Activated naive CD4-positive, alpha-beta T cell treated with anti-CD3 and anti-CD28 coated beads for 36 hours (primary cell): ENCODE measurements at regions of chr4 and their contacts with region 1.

Region 1: GRCh38 chr4:54941994-54942552 is 183.3 kb downstream of the KDR start:
- DNase-seq: peak; percentile 65
- H3K4me3 Mint-ChIP-seq: peak overlapping the region; percentile 42
- H3K27ac Mint-ChIP-seq: peak overlapping the region; percentile 69
- H3K4me1 Mint-ChIP-seq: peaks cover 55% of the 10 kb centered on the region
- H3K27me3 Mint-ChIP-seq: no peaks in the 10 kb centered on the region

Region 2: GRCh38 chr4:53730031-53730805 is 1211.9 kb before region 1 on chr4:
- CTCF ChIA-PET with region 1: no interaction called
- intact Hi-C with region 1: no loop called
- DNase-seq: no peak
- H3K4me3 Mint-ChIP-seq: no peak overlapping the region
- H3K27ac Mint-ChIP-seq: no peak overlapping the region
- H3K4me1 Mint-ChIP-seq: no peaks in the 10 kb centered on the region
- H3K27me3 Mint-ChIP-seq: peaks cover 3% of the 10 kb centered on the region

Region 3: GRCh38 chr4:54120518-54120917 is 821.6 kb before region 1 on chr4:
- CTCF ChIA-PET with region 1: no interaction called
- intact Hi-C with region 1: no loop called
- DNase-seq: no peak
- H3K4me3 Mint-ChIP-seq: no peak overlapping the region
- H3K27ac Mint-ChIP-seq: no peak overlapping the region
- H3K4me1 Mint-ChIP-seq: no peaks in the 10 kb centered on the region
- H3K27me3 Mint-ChIP-seq: peaks cover 18% of the 10 kb centered on the region

Region 4: DNA sequence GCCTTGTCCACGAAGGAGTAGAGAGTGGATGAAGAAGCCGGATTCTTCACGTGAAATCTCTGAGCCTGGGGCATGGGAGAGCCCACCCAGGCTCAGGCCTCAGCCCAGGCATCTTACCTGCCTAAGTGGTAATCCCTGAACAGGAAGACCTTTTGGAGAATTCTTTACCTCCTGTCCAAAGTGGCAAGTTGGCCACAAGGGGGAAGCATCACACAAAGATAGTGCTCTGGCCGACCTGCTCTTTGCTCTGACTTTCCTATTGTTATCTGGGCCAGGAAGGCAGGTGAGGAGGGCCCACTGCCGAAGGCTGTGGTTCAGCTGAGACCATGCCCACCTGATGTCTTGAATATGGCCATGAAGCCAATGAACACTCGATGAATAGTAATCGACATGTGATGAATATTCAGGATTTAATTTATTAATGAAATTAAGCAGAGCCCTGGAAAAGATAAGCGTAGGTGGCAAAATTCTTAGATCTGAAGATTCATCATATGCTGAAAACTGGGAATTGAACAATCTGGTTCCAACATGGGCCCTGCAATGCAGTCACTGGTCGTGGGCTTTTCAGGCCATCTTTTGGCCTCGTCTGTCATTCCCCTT is 619.2 kb before region 1 on chr4:
- CTCF ChIA-PET with region 1: no interaction called
- intact Hi-C with region 1: loop called (anchors 2 kb)
- DNase-seq: peak; percentile 78
- H3K4me3 Mint-ChIP-seq: no peak overlapping the region
- H3K27ac Mint-ChIP-seq: no peak overlapping the region
- H3K4me1 Mint-ChIP-seq: no peaks in the 10 kb centered on the region
- H3K27me3 Mint-ChIP-seq: no peaks in the 10 kb centered on the region

Region 5: GRCh38 chr4:54683616-54684346 is 258.3 kb before region 1 on chr4:
- CTCF ChIA-PET with region 1: interaction called, 5 read pairs
- intact Hi-C with region 1: loop called (anchors 1 kb)
- DNase-seq: peak; percentile 81
- H3K4me3 Mint-ChIP-seq: no peak overlapping the region
- H3K27ac Mint-ChIP-seq: no peak overlapping the region
- H3K4me1 Mint-ChIP-seq: peaks cover 20% of the 10 kb centered on the region
- H3K27me3 Mint-ChIP-seq: no peaks in the 10 kb centered on the region

Region 6: DNA sequence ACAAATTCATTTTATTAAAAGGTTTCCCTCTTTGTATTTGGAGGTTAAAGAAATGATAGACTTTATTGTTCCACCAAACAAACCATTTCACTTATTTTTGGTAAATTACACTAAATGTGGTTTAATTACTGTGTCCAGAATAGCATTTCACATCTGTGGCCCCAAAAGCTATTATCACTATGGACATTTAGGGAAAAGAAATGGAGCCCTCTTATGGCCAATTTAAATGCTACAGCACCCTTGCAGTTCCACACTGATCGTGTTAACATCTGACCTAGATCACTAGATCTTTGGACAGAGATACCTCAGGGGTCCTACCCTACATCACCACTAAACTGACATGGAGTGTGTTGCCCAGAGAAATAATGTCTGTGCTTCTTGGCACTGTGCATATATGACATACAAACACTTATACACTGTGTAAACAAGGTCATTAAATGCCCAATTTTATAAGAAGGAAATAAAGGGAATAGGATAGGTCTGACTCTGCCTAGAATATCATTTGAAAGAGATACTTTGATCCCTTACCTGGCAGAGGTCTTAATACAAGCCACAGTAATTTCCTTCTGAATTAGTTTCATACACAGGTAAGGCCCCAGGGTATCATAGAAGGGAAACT is 19.4 kb after region 1 on chr4:
- CTCF ChIA-PET with region 1: interaction called, 6 read pairs
- intact Hi-C with region 1: loop called (anchors 1 kb)
- DNase-seq: peak; percentile 15
- H3K4me3 Mint-ChIP-seq: no peak overlapping the region
- H3K27ac Mint-ChIP-seq: no peak overlapping the region
- H3K4me1 Mint-ChIP-seq: peaks cover 26% of the 10 kb centered on the region
- H3K27me3 Mint-ChIP-seq: no peaks in the 10 kb centered on the region

Region 7: DNA sequence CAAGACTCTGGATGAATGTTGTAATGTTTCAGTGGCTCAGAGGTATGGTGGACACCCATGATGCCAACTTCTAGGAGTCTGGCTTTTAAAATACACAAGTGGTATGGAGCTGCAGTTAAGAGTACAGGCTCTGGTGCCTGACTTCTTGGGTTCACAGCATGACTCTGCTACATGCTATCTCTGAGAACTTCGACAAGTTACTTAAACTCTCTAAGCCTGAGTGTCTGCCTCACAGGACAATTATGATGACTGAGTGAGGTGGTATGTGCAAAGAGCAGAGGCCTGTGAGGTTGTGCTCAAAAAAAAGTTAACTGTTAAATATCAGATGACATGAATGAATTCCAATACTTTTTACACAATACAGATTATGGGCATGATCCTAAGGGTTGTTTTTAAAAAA is 313.1 kb after region 1 on chr4:
- CTCF ChIA-PET with region 1: no interaction called
- intact Hi-C with region 1: no loop called
- DNase-seq: no peak
- H3K4me3 Mint-ChIP-seq: no peak overlapping the region
- H3K27ac Mint-ChIP-seq: no peak overlapping the region
- H3K4me1 Mint-ChIP-seq: no peaks in the 10 kb centered on the region
- H3K27me3 Mint-ChIP-seq: peaks cover 11% of the 10 kb centered on the region

Region 8: DNA sequence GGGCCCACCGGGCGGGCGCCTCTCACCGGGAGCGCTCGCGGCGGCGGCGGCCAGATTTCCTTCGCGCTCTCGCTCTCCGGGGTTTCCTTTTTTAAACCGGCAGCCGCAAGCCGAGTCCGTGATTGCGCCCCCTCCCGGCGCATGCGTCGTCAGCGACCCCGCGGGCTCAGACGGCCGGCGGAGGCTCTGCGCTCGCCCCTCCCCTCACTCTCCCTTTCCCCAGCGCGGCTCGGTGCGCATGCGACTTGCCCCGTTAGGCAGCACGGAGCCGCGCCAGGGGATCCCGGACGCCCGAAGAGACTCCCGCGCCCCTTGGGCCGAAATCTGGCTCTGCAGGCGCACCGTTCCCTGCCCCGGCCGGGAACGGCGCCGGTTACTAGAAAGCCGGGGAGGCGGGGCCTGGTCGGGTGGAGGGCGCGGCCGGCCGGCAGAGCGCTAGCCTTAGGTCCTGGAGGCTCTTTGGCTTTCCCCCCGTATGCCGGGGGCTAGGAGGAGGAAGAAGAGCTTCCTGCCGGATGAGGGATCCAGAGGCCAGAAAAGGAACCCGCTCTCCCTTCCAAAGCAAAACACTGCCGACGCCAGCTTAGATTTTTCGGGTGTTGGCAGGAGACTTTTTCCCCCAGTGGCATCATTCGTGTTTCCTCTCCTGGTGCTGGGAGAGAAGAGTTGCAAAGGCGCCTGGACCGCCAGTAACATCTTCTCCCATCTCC is 604.8 kb after region 1 on chr4 and contains the start of gene CLOCK:
- CTCF ChIA-PET with region 1: no interaction called
- intact Hi-C with region 1: loop called (anchors 2 kb)
- DNase-seq: peak; percentile 83
- H3K4me3 Mint-ChIP-seq: peak within 1 kb of the TSS; percentile 84
- H3K27ac Mint-ChIP-seq: peak within 1 kb of the TSS; percentile 89
- H3K4me1 Mint-ChIP-seq: peaks cover 50% of the 10 kb centered on the region
- H3K27me3 Mint-ChIP-seq: no peaks in the 10 kb centered on the region
- total RNA-seq, gene CLOCK: 8.1 to 8.5 TPM